CD4-positive, alpha-beta T cell (primary cell): ENCODE measurements at regions of chr15 and their contacts with region 1.

Region 1: DNA sequence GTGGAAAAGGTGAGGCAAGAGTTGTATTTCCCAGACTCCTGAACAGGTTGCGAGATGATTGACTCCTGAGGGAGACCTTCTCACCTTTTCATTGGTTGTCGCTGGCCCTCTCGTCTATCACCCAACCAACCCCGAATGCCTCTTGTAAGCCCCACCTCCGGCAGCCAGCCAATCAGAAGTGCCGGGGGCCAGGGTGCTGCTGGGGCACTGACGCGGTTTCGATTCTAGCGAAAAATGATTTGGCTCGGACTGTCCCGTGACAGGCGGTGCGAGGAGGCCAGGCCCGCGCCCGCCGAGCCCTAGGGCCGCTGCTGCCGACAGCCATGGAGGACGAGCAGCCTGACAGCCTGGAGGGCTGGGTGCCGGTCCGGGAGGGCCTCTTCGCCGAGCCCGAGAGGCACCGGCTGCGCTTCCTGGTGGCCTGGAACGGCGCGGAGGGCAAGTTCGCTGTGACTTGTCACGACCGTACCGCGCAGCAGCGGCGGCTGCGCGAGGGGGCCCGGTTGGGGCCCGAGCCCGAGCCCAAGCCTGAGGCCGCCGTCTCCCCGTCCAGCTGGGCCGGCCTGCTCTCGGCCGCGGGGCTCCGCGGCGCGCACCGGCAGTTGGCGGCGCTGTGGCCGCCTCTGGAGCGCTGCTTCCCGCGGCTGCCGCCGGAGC is at the start of gene WHAMM:
- DNase-seq: peak; percentile 88 to 98 (median 93)
- ATAC-seq: peak; percentile 95
- H3K4me3 ChIP-seq: peak within 1 kb of the TSS; percentile 65
- H3K4me3 Mint-ChIP-seq: peak within 1 kb of the TSS; percentile 91
- H3K27ac ChIP-seq: peak within 1 kb of the TSS; percentile 82 to 99
- H3K27ac Mint-ChIP-seq: peak within 1 kb of the TSS; percentile 94
- H3K4me1 ChIP-seq: peaks cover 29% of the 10 kb centered on the region
- H3K4me1 Mint-ChIP-seq: peaks cover 35% of the 10 kb centered on the region
- H3K27me3 ChIP-seq: no peaks in the 10 kb centered on the region
- H3K27me3 Mint-ChIP-seq: no peaks in the 10 kb centered on the region
- CTCF ChIP-seq: no peak
- total RNA-seq, gene WHAMM: 86.4 to 87.7 TPM

Region 2: GRCh38 chr15:82540055-82540983 is 269.2 kb before region 1 on chr15 and contains the start of gene RPS17:
- CTCF ChIA-PET with region 1: interaction called, 4 read pairs
- POLR2A ChIA-PET with region 1: interaction called, 45 read pairs
- intact Hi-C with region 1: loop called (anchors 2 to 5 kb)
- DNase-seq: peak; percentile 96 to 99 (median 98)
- ATAC-seq: peak; percentile 91
- H3K4me3 ChIP-seq: peak within 1 kb of the TSS; percentile 85
- H3K4me3 Mint-ChIP-seq: peak within 1 kb of the TSS; percentile 99
- H3K27ac ChIP-seq: peak within 1 kb of the TSS; percentile 81 to 86
- H3K27ac Mint-ChIP-seq: peak within 1 kb of the TSS; percentile 97
- H3K4me1 ChIP-seq: peaks cover 32% of the 10 kb centered on the region
- H3K4me1 Mint-ChIP-seq: peaks cover 39% of the 10 kb centered on the region
- H3K27me3 ChIP-seq: no peaks in the 10 kb centered on the region
- H3K27me3 Mint-ChIP-seq: no peaks in the 10 kb centered on the region
- CTCF ChIP-seq: peak; percentile 99
- total RNA-seq, gene RPS17: 3,141 to 3,180 TPM

Region 3: GRCh38 chr15:82749951-82750830 is 59.3 kb before region 1 on chr15:
- CTCF ChIA-PET with region 1: interaction called, 6 read pairs
- POLR2A ChIA-PET with region 1: interaction called, 51 read pairs
- intact Hi-C with region 1: loop called (anchors 2 kb)
- DNase-seq: peak; percentile 59 to 90 (median 77)
- ATAC-seq: peak; percentile 93
- H3K4me3 ChIP-seq: peak overlapping the region; percentile 84
- H3K4me3 Mint-ChIP-seq: peak overlapping the region; percentile 99
- H3K27ac ChIP-seq: peak overlapping the region; percentile 62 to 82
- H3K27ac Mint-ChIP-seq: peak overlapping the region; percentile 85
- H3K4me1 ChIP-seq: peaks cover 28% of the 10 kb centered on the region
- H3K4me1 Mint-ChIP-seq: peaks cover 57% of the 10 kb centered on the region
- H3K27me3 ChIP-seq: no peaks in the 10 kb centered on the region
- H3K27me3 Mint-ChIP-seq: no peaks in the 10 kb centered on the region
- CTCF ChIP-seq: no peak

Region 4: DNA sequence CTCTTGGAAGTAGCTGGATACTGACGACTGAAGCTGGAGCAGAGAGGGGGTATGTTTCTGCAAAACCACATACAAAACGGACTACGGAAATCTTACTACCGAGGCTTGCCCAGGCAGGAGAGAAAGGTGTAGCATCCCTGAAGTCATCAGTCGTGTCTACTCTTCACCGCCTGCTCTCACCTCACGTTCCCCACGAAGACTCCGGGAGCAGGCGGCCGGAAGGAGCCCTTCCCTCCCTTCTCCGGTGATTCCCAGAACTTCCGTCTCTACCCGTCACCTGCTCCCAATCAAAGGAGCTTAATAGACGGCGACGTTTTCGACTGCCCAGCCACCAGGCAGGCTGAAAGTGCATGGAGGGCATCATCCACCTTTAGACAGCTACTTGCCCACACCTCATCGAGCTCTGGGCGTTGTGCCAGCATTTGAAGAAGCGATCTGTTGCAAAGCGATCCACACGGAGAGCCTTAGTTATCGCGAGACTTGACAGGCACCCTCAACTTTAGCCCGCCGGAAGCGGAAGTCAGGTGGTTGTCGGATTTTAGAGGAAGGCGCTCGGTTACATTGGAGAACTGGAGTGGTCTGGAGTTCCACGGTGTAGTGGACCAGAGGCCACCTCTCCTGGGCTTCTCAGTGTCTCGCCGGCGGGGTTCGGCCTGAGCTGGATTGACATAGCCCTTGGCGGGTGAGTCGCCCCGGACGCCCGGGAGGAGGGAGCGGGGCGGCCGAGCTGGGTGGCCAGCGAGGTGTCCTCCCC is 176.3 kb after region 1 on chr15 and contains the start of gene RAMAC:
- CTCF ChIA-PET with region 1: interaction called, 3 read pairs
- POLR2A ChIA-PET with region 1: interaction called, 17 read pairs
- intact Hi-C with region 1: loop called (anchors 2 to 10 kb)
- DNase-seq: peak; percentile 84 to 98 (median 92)
- ATAC-seq: peak; percentile 92
- H3K4me3 ChIP-seq: peak within 1 kb of the TSS; percentile 94
- H3K4me3 Mint-ChIP-seq: peak within 1 kb of the TSS; percentile 97
- H3K27ac ChIP-seq: peak within 1 kb of the TSS; percentile 54 to 65
- H3K27ac Mint-ChIP-seq: peak within 1 kb of the TSS; percentile 87
- H3K4me1 ChIP-seq: peaks cover 18% of the 10 kb centered on the region
- H3K4me1 Mint-ChIP-seq: peaks cover 27% of the 10 kb centered on the region
- H3K27me3 ChIP-seq: no peaks in the 10 kb centered on the region
- H3K27me3 Mint-ChIP-seq: no peaks in the 10 kb centered on the region
- CTCF ChIP-seq: no peak
- total RNA-seq, gene RAMAC: 25.5 to 26.5 TPM

Region 5: GRCh38 chr15:83018436-83018835 is 208.9 kb after region 1 on chr15:
- CTCF ChIA-PET with region 1: no interaction called
- POLR2A ChIA-PET with region 1: no interaction called
- intact Hi-C with region 1: loop called in 1 of 2 experiments (anchors 1 kb)
- DNase-seq: no peak
- ATAC-seq: no peak
- H3K4me3 ChIP-seq: no peak overlapping the region
- H3K4me3 Mint-ChIP-seq: no peak overlapping the region
- H3K27ac ChIP-seq: no peak overlapping the region
- H3K27ac Mint-ChIP-seq: no peak overlapping the region
- H3K4me1 ChIP-seq: no peaks in the 10 kb centered on the region
- H3K4me1 Mint-ChIP-seq: peaks cover 24% of the 10 kb centered on the region
- H3K27me3 ChIP-seq: no peaks in the 10 kb centered on the region
- H3K27me3 Mint-ChIP-seq: no peaks in the 10 kb centered on the region
- CTCF ChIP-seq: no peak

Region 6: GRCh38 chr15:83837945-83838571 is 1028.5 kb after region 1 on chr15:
- CTCF ChIA-PET with region 1: no interaction called
- POLR2A ChIA-PET with region 1: no interaction called
- intact Hi-C with region 1: no loop called
- DNase-seq: no peak
- ATAC-seq: no peak
- H3K4me3 ChIP-seq: no peak overlapping the region
- H3K4me3 Mint-ChIP-seq: no peak overlapping the region
- H3K27ac ChIP-seq: no peak overlapping the region
- H3K27ac Mint-ChIP-seq: no peak overlapping the region
- H3K4me1 ChIP-seq: no peaks in the 10 kb centered on the region
- H3K4me1 Mint-ChIP-seq: no peaks in the 10 kb centered on the region
- H3K27me3 ChIP-seq: peaks cover 0 to 5% of the 10 kb centered on the region in 2 experiments
- H3K27me3 Mint-ChIP-seq: peaks cover 20% of the 10 kb centered on the region
- CTCF ChIP-seq: no peak